Aorta (tissue), 5 donors: ENCODE measurements at regions of chr20 and their contacts with region 1.

Region 1: GRCh38 chr20:40962730-40963504 is 65.7 kb upstream of the TOP1 start:
- DNase-seq: peak; percentile 77 to 87
- ATAC-seq: peak; percentile 79
- H3K4me3 ChIP-seq: no peak overlapping the region
- H3K27ac ChIP-seq: no peak overlapping the region
- H3K4me1 ChIP-seq: no peaks in the 10 kb centered on the region
- H3K27me3 ChIP-seq: no peaks in the 10 kb centered on the region

Region 2: DNA sequence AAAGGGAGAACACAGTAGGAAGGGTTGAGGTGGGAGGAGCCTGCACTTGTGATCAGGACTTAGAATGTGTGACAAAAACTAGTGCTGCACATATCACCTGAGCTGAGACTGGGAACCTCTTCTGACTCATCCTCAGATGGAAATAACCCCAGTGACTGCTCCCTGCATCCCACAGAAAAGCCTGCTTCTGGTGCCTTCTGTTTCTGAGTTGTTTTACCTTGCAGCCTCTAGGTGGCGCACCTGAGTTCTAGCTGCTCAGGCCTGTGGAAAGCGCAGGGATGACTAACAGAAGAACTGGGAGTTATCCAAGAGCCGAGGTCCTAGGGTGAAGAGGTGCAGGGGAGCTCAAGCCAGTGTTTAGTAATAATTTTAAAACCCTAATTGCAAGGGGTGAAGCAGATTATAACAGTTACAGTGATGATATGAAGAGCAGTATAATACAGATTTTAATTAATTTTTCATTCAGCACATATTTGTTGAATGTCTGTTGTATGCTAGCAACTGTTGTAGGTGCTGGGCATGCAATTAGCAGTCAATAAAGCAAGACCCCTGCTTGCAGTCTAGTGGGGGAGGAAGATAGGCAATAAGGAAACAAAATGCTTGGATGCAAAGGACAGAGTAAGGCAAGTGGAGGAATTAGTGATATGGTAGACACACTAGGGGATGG is 1698.3 kb before region 1 on chr20:
- intact Hi-C with region 1: loop called in 1 of 2 experiments (anchors 5 kb)
- DNase-seq: peak; percentile 66 to 82
- ATAC-seq: peak; percentile 74
- H3K4me3 ChIP-seq: no peak overlapping the region
- H3K27ac ChIP-seq: no peak overlapping the region
- H3K4me1 ChIP-seq: no peaks in the 10 kb centered on the region
- H3K27me3 ChIP-seq: no peaks in the 10 kb centered on the region

Region 3: GRCh38 chr20:40741507-40742106 is 221.3 kb before region 1 on chr20:
- intact Hi-C with region 1: loop called in 1 of 2 experiments (anchors 5 kb)
- DNase-seq: peak in 1 of 2 donors; percentile 71
- ATAC-seq: no peak
- H3K4me3 ChIP-seq: no peak overlapping the region
- H3K27ac ChIP-seq: no peak overlapping the region
- H3K4me1 ChIP-seq: no peaks in the 10 kb centered on the region
- H3K27me3 ChIP-seq: no peaks in the 10 kb centered on the region

Region 4: GRCh38 chr20:41047975-41048305 is 85.0 kb after region 1 on chr20:
- intact Hi-C with region 1: no loop called
- DNase-seq: no peak
- ATAC-seq: peak; percentile 65
- H3K4me3 ChIP-seq: peak overlapping the region; percentile 3 to 48
- H3K27ac ChIP-seq: no peak overlapping the region
- H3K4me1 ChIP-seq: peaks cover 4 to 19% of the 10 kb centered on the region in 2 donors
- H3K27me3 ChIP-seq: no peaks in the 10 kb centered on the region

Region 5: GRCh38 chr20:41095110-41095969 is 132.4 kb after region 1 on chr20:
- intact Hi-C with region 1: loop called (anchors 2 to 5 kb)
- DNase-seq: peak; percentile 60 to 82
- ATAC-seq: peak; percentile 81
- H3K4me3 ChIP-seq: no peak overlapping the region
- H3K27ac ChIP-seq: no peak overlapping the region
- H3K4me1 ChIP-seq: no peaks in the 10 kb centered on the region
- H3K27me3 ChIP-seq: no peaks in the 10 kb centered on the region